CD8-positive, alpha-beta T cell (primary cell): ENCODE measurements at regions of chr6 and their contacts with region 1.

Region 1: DNA sequence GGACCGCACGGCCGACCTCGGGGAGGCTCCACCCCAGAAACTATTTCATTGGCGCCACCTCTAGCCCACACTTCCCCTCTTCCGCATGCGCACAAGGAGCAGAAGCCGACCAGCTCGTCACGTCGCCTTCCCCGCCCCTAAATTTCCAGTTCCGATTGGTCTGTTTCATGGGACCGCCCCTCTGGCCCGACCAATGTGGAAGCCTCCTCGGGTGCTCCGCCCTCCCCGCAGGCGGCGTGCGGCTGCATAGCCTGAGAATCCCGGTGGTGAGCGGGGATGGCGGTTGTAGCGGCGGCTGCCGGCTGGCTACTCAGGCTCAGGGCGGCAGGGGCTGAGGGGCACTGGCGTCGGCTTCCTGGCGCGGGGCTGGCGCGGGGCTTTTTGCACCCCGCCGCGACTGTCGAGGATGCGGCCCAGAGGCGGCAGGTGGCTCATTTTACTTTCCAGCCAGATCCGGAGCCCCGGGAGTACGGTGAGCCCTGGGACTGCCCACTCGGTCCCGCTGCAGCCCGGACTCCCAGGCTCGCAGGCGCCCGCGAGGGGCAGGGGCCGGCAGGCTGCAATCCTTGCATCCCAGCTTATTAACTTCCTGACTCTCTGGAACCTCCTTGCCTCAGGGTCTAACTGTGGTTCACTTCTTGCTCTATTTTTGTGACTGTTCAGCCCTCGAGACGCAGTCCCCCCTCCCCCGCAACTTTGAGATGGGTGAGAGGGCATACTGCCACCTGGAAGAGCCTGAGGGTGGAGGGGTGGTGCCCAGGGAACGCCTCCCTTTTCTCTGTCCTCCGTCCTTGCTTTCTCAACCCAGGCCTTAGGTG is at the start of gene BCKDHB:
- DNase-seq: peak; percentile 95 to 99 (median 97)
- ATAC-seq: peak; percentile 97
- H3K4me3 ChIP-seq: peak within 1 kb of the TSS; percentile 71 to 81
- H3K4me3 Mint-ChIP-seq: peak within 1 kb of the TSS; percentile 93
- H3K27ac ChIP-seq: peak within 1 kb of the TSS; percentile 39 to 67
- H3K27ac Mint-ChIP-seq: peak within 1 kb of the TSS; percentile 91
- H3K4me1 ChIP-seq: peaks cover 15% of the 10 kb centered on the region
- H3K4me1 Mint-ChIP-seq: peaks cover 25% of the 10 kb centered on the region
- H3K27me3 ChIP-seq: no peaks in the 10 kb centered on the region
- H3K27me3 Mint-ChIP-seq: no peaks in the 10 kb centered on the region
- CTCF ChIP-seq: no peak
- total RNA-seq, gene BCKDHB: 8.2 to 8.3 TPM

Region 2: GRCh38 chr6:78867370-78868040 is 1239.1 kb before region 1 on chr6 and contains the start of gene IRAK1BP1:
- CTCF ChIA-PET with region 1: no interaction called
- POLR2A ChIA-PET with region 1: no interaction called
- intact Hi-C with region 1: loop called in 1 of 2 experiments (anchors 5 kb)
- DNase-seq: peak; percentile 58 to 86 (median 77)
- ATAC-seq: peak; percentile 91
- H3K4me3 ChIP-seq: peak within 1 kb of the TSS; percentile 83 to 88
- H3K4me3 Mint-ChIP-seq: peak within 1 kb of the TSS; percentile 96
- H3K27ac ChIP-seq: peak within 1 kb of the TSS; percentile 76 to 88
- H3K27ac Mint-ChIP-seq: peak within 1 kb of the TSS; percentile 95
- H3K4me1 ChIP-seq: peaks cover 10% of the 10 kb centered on the region
- H3K4me1 Mint-ChIP-seq: peaks cover 27% of the 10 kb centered on the region
- H3K27me3 ChIP-seq: no peaks in the 10 kb centered on the region
- H3K27me3 Mint-ChIP-seq: no peaks in the 10 kb centered on the region
- CTCF ChIP-seq: no peak
- total RNA-seq, gene IRAK1BP1: 1.0 to 1.3 TPM

Region 3: GRCh38 chr6:79536954-79537747 is 569.5 kb before region 1 on chr6 and contains the start of gene LCA5:
- CTCF ChIA-PET with region 1: no interaction called
- POLR2A ChIA-PET with region 1: no interaction called
- intact Hi-C with region 1: loop called in 1 of 2 experiments (anchors 5 kb)
- DNase-seq: peak; percentile 54 to 92 (median 79)
- ATAC-seq: peak; percentile 96
- H3K4me3 ChIP-seq: peak within 1 kb of the TSS; percentile 65 to 69
- H3K4me3 Mint-ChIP-seq: no peak within 1 kb of the TSS
- H3K27ac ChIP-seq: peak within 1 kb of the TSS; percentile 14 to 32
- H3K27ac Mint-ChIP-seq: no peak within 1 kb of the TSS
- H3K4me1 ChIP-seq: peaks cover 5% of the 10 kb centered on the region
- H3K4me1 Mint-ChIP-seq: no peaks in the 10 kb centered on the region
- H3K27me3 ChIP-seq: no peaks in the 10 kb centered on the region
- H3K27me3 Mint-ChIP-seq: peaks cover 12% of the 10 kb centered on the region
- CTCF ChIP-seq: no peak
- total RNA-seq, gene LCA5: not detected

Region 4: DNA sequence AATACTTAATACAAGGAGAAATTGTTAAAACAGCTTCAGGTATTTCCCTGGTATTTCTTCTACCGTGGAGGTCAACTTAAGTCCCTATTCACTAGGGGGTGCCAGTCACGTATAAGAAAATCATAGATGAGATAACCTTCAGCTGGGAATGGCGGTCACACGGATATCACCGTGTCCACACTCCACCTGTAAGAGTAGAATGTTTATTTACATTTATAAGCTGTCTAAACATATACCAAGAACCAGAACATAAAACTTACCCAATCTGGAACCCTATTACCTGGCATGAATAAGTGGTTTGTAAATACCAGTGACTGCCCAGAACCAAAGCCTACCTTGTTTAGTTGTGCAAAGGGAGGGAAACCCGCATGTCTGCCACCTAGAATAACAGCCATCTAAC is 157.4 kb before region 1 on chr6:
- CTCF ChIA-PET with region 1: interaction called, 11 read pairs
- POLR2A ChIA-PET with region 1: interaction called, 5 read pairs
- intact Hi-C with region 1: no loop called
- DNase-seq: peak in 7 of 9 experiments; percentile 25 to 88 (median 57)
- ATAC-seq: peak; percentile 24
- H3K4me3 ChIP-seq: no peak overlapping the region
- H3K4me3 Mint-ChIP-seq: peak overlapping the region; percentile 9
- H3K27ac ChIP-seq: no peak overlapping the region
- H3K27ac Mint-ChIP-seq: peak overlapping the region; percentile 5
- H3K4me1 ChIP-seq: peaks cover 16% of the 10 kb centered on the region
- H3K4me1 Mint-ChIP-seq: peaks cover 27% of the 10 kb centered on the region
- H3K27me3 ChIP-seq: no peaks in the 10 kb centered on the region
- H3K27me3 Mint-ChIP-seq: peaks cover 2% of the 10 kb centered on the region
- CTCF ChIP-seq: peak; percentile 80

Region 5: DNA sequence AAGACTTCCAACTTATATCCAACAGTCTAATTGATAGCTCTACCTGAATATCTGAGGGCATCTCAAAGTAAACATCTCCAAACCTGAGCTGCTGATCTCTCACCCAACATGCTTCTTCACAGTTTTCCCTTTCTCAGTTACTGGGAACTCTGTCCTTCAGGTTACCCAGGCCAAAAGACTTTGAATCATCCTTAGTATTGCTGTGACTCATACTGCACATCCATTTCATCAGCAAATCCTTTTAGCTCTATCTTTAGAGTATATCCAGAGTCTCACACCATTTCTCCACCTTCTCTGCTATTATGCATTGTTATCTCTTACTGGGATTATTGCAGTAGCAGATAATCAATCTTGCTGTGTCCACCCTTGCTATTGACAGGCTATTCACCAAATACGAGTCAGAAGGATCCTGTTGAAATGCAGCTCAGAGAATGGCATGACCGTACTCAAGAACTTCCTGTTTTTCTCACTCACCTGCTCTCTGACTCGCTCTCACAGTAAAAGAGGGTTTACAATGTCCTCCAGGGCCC is 57.1 kb after region 1 on chr6:
- CTCF ChIA-PET with region 1: no interaction called
- POLR2A ChIA-PET with region 1: interaction called, 5 read pairs
- intact Hi-C with region 1: loop called in 1 of 2 experiments (anchors 2 kb)
- DNase-seq: peak in 3 of 9 experiments; percentile 1 to 30 (median 9)
- ATAC-seq: peak; percentile 56
- H3K4me3 ChIP-seq: no peak overlapping the region
- H3K4me3 Mint-ChIP-seq: no peak overlapping the region
- H3K27ac ChIP-seq: peak overlapping the region in 1 of 2 experiments; percentile 36
- H3K27ac Mint-ChIP-seq: no peak overlapping the region
- H3K4me1 ChIP-seq: peaks cover 18% of the 10 kb centered on the region
- H3K4me1 Mint-ChIP-seq: peaks cover 9% of the 10 kb centered on the region
- H3K27me3 ChIP-seq: no peaks in the 10 kb centered on the region
- H3K27me3 Mint-ChIP-seq: no peaks in the 10 kb centered on the region
- CTCF ChIP-seq: no peak